Dorsolateral prefrontal cortex (tissue), 120 donors: ENCODE measurements at regions of chr4 and their contacts with region 1.

Region 1: GRCh38 chr4:71009890-71010588 is 16.6 kb downstream of the DCK start:
- DNase-seq: no peak
- H3K4me3 ChIP-seq: no peak overlapping the region
- H3K27ac ChIP-seq: no peak overlapping the region
- H3K27me3 ChIP-seq: no peaks in the 10 kb centered on the region
- CTCF ChIP-seq: peak; percentile 46 to 93 (median 72)

Region 2: GRCh38 chr4:70651864-70652506 is 358.1 kb before region 1 on chr4:
- intact Hi-C with region 1: loop called in 1 of 2 experiments (anchors 2 kb)
- DNase-seq: no peak
- H3K4me3 ChIP-seq: peak overlapping the region in 7 of 59 donors; percentile 3 to 33 (median 16)
- H3K27ac ChIP-seq: peak overlapping the region in 1 of 59 donors; percentile 33
- H3K27me3 ChIP-seq: peaks cover 0 to 2% (median 0%) of the 10 kb centered on the region in 45 donors
- CTCF ChIP-seq: peak in 55 of 56 donors; percentile 39 to 78 (median 58)